ENCODE measurements at regions of chr7 and their contacts with region 1.

Region 1: GRCh38 chr7:142338633-142339501 is 81.0 kb upstream of the PRSS58 start:
- DNase-seq: peak; percentile 88
- ATAC-seq: peak; percentile 99
- H3K4me3 Mint-ChIP-seq: no peak overlapping the region
- H3K27ac Mint-ChIP-seq: 0 out of 2 replicates have a peak overlapping the region, but pooled peaks have one; percentile 24
- H3K4me1 Mint-ChIP-seq: peaks cover 10% of the 10 kb centered on the region
- H3K27me3 Mint-ChIP-seq: no peaks in the 10 kb centered on the region
- CTCF ChIP-seq: peak; percentile 42; the same call in 1 of the 2 replicates

Region 2: DNA sequence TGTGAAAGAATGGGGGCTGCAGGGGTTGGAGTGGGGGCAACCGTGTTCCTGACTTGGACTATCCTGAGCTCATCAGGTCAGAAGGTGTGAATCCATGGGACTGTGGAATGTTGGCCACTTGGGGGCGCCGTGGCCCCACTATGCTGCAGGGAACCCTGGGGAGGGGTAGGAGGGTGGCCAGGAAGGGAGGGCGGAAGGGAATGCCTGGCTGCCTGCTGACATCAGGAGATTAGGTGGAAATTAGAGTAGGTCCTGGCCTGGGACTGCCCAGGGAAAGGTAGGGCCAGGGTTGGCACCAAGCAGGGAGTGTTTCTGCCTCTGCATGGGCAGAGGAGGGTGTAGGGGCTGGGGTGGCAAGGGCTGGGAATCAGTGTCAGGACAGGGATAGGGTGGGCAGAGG is 15.2 kb before region 1 on chr7:
- CTCF ChIA-PET with region 1: interaction called, 47 read pairs
- POLR2A ChIA-PET with region 1: no interaction called
- DNase-seq: peak; percentile 88
- ATAC-seq: peak; percentile 71
- H3K4me3 Mint-ChIP-seq: no peak overlapping the region
- H3K27ac Mint-ChIP-seq: peak overlapping the region; percentile 16; the same call in 1 of the 2 replicates
- H3K4me1 Mint-ChIP-seq: peaks cover 32% of the 10 kb centered on the region
- H3K27me3 Mint-ChIP-seq: no peaks in the 10 kb centered on the region; the same call in 1 of the 2 replicates
- CTCF ChIP-seq: peak; percentile 70

Region 3: DNA sequence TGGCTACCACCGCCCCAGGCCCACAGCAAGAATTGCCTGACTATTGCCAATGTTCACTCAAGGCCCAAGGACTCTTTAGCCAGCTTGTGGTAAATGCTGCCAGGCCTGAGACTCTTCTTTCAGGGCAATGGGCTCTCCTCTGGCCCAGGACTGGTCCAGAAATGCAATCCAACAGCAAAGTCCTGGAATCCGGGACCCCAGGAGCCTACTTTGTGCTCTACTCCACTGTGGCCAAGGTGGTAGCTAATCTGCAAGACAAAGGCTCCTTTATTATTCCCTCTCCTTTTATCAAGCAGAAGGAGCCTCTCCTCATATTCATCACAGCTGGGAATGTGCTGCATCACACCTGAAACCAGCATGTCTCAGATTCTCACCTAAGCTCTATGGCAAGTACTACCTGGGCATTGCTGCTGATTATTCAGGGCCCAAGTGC is 26.6 kb after region 1 on chr7:
- CTCF ChIA-PET with region 1: interaction called, 28 read pairs
- POLR2A ChIA-PET with region 1: no interaction called
- DNase-seq: peak; percentile 64
- ATAC-seq: peak; percentile 97
- H3K4me3 Mint-ChIP-seq: peak overlapping the region; percentile 28; the same call in 1 of the 2 replicates
- H3K27ac Mint-ChIP-seq: peak overlapping the region; percentile 99
- H3K4me1 Mint-ChIP-seq: peaks cover 37% of the 10 kb centered on the region
- H3K27me3 Mint-ChIP-seq: peaks cover 45% of the 10 kb centered on the region
- CTCF ChIP-seq: no peak

Region 4: GRCh38 chr7:142438235-142438922 is 99.5 kb after region 1 on chr7:
- CTCF ChIA-PET with region 1: interaction called, 16 read pairs
- POLR2A ChIA-PET with region 1: no interaction called
- DNase-seq: peak; percentile 68
- ATAC-seq: peak; percentile 90
- H3K4me3 Mint-ChIP-seq: no peak overlapping the region
- H3K27ac Mint-ChIP-seq: no peak overlapping the region
- H3K4me1 Mint-ChIP-seq: peaks cover 17% of the 10 kb centered on the region
- H3K27me3 Mint-ChIP-seq: no peaks in the 10 kb centered on the region; the same call in 1 of the 2 replicates
- CTCF ChIP-seq: peak; percentile 69

Region 5: DNA sequence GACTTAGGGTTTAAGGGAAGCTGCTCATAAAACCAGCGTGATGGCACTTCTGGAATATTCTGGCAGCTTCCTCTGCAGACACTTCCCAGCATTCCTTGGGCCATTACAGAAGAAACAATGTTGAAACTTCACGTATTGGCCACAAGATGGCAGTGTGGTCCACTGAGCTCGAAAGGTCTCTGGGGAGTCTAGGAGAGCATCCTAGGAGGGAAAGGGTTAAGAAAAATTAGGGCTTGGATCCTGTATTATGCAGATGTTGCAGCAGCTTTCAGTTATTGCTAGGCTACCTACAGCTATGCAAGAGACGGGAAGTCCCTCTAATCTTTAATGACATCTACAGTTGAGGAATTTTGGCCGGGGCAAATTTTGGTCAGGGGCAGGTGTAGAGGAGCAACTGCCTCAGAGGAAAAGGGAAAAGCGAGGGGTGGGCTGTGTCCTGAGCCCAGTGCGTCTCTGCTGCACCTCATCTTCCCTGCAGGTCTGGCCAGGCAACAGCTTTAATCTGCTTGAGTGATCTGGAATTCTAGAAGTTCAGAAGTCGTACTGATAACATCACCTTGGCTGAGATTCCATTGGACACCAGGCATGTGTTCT is 139.7 kb after region 1 on chr7:
- CTCF ChIA-PET with region 1: interaction called, 64 read pairs
- POLR2A ChIA-PET with region 1: no interaction called
- DNase-seq: peak; percentile 38
- ATAC-seq: peak; percentile 79
- H3K4me3 Mint-ChIP-seq: no peak overlapping the region
- H3K27ac Mint-ChIP-seq: no peak overlapping the region
- H3K4me1 Mint-ChIP-seq: peaks cover 11% of the 10 kb centered on the region
- H3K27me3 Mint-ChIP-seq: peaks cover 12% of the 10 kb centered on the region
- CTCF ChIP-seq: peak; percentile 62

Region 6: GRCh38 chr7:142535123-142535779 is 196.4 kb after region 1 on chr7:
- CTCF ChIA-PET with region 1: interaction called, 16 read pairs
- POLR2A ChIA-PET with region 1: interaction called, 3 read pairs
- DNase-seq: peak; percentile 86
- ATAC-seq: peak; percentile 100
- H3K4me3 Mint-ChIP-seq: peak overlapping the region; percentile 42; the same call in 1 of the 2 replicates
- H3K27ac Mint-ChIP-seq: 0 out of 2 replicates have a peak overlapping the region, but pooled peaks have one; percentile 42
- H3K4me1 Mint-ChIP-seq: peaks cover 4% of the 10 kb centered on the region
- H3K27me3 Mint-ChIP-seq: peaks cover 5% of the 10 kb centered on the region; the same call in 1 of the 2 replicates
- CTCF ChIP-seq: peak; percentile 70

Region 7: DNA sequence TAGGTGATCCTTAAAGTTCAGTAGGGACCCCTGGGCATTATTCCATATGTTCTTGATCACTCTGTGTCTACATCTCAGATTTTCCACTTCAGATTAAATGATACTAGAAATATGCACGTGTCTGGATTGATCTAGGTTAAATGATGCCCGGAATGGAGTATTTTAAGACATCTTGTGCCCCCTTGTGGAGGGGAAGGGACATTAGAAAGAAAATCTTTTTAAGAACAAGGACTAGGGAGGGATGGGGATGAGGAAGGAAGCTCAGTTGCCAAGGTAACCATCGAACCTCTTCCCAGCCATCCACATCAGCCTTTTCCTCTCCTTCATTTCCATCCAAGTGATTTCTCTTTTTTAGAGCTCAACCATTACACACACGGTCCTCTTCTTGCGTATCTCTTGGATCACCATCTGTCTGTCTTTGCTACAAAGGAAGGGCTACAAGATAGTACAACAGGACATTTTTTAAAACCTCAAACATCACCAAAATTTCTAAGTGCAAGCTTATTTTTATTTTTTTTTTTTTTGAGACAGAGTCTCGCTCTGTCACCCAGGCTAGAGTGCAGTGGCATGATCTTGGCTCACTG is 472.4 kb after region 1 on chr7:
- CTCF ChIA-PET with region 1: interaction called, 13 read pairs
- POLR2A ChIA-PET with region 1: no interaction called
- DNase-seq: no peak
- ATAC-seq: peak; percentile 22
- H3K4me3 Mint-ChIP-seq: no peak overlapping the region
- H3K27ac Mint-ChIP-seq: no peak overlapping the region; the same call in 1 of the 2 replicates
- H3K4me1 Mint-ChIP-seq: peaks cover 60% of the 10 kb centered on the region
- H3K27me3 Mint-ChIP-seq: peaks cover 12% of the 10 kb centered on the region
- CTCF ChIP-seq: peak; percentile 60

Measured in WTC11 (cell line).